GM12878 (cell line): ENCODE measurements at regions of chr11 and their contacts with region 1.

Region 1: GRCh38 chr11:83156150-83156995 is 558 bp upstream of the PCF11 start:
- DNase-seq: peak; percentile 100
- ATAC-seq: peak; percentile 89
- H3K4me3 ChIP-seq: peak overlapping the region; percentile 80
- H3K27ac ChIP-seq: peak overlapping the region; percentile 85
- H3K4me1 ChIP-seq: peaks cover 3% of the 10 kb centered on the region; the same call in 1 of the 2 replicates
- H3K27me3 ChIP-seq: no peaks in the 10 kb centered on the region
- CTCF ChIP-seq: no peak
- EP300 ChIP-seq: no peak; a peak in 1 of 4 replicates
- POLR2A ChIP-seq: no peak
- RAD21 ChIP-seq: no peak

Region 2: DNA sequence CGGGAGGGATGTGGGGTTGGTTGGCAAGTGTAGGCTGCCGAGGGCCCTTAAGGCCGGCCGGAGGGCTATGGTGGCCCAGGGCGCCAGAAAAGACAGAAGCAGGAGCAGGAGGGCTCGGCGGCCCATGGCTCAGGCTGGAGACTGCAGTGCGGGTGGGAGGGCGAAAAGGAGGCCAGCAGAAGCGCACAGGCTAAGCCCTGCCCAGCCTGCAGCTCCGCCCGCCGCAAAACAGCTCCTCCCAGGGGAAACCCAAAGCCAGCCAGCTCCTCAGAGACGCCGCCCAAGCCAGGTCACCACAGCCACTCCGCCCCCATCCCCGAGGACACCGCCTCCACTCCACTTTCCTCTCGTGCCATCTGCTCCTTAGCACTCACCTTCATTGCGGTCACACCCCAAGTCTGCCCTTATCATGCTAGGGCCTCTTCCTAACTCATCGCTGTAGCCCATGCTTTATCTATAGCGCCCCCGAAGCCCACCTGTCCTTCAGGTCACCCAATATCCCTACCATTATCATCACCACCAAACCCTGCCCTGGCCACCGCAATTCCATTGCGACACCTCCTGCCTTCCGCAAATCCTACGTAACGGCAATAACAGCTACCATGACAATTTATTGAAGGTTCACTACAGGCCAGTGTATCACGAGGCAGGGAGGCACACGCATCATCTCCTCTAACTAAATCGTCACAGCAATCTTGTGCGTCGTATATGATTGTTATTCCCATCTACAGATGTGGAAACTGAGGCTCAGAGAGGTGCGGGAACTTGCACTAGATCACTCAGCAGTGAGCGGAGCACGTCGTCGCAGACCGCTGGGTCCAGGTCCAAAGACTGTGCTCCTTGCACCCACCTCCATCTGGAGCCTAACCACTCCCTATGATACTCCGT is 255.9 kb before region 1 on chr11 and contains the start of gene PRCP:
- CTCF ChIA-PET with region 1: interaction called, 6 read pairs
- POLR2A ChIA-PET with region 1: interaction called, 22 read pairs
- RAD21 ChIA-PET with region 1: interaction called, 17 read pairs
- SMC1A ChIA-PET with region 1: interaction called, 7 read pairs
- in situ Hi-C with region 1: loop called (anchors 5 kb)
- intact Hi-C with region 1: loop called (anchors 5 kb)
- DNase-seq: peak; percentile 84
- ATAC-seq: peak; percentile 88
- H3K4me3 ChIP-seq: peak within 1 kb of the TSS; percentile 82
- H3K27ac ChIP-seq: peak within 1 kb of the TSS; percentile 84
- H3K4me1 ChIP-seq: peaks cover 15% of the 10 kb centered on the region
- H3K27me3 ChIP-seq: no peaks in the 10 kb centered on the region
- CTCF ChIP-seq: no peak
- EP300 ChIP-seq: 0 out of 4 replicates have a peak, but pooled peaks of 1 of the 2 experiments have one; percentile 12
- POLR2A ChIP-seq: peak; percentile 84
- RAD21 ChIP-seq: no peak
- polyA plus RNA-seq, gene PRCP: 21.5 to 25.3 TPM

Region 3: DNA sequence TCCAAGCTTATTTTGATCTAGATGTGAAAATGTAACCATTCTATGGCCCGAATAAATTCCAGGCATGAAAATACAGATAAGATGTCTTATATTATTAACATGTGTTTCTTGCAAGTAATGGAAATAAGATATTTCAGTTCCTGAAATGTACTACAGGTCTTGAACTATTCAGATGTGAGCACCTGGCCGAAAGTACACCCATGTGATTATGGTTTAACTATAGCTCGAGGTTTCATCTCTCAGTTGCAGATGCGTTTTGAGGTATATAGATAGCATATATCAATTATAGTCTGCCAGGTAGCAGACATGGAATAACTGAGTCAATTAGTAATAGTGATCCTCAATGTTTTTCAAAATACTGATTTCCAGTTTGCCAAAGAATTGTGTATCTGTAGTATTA is 186.6 kb before region 1 on chr11:
- CTCF ChIA-PET with region 1: no interaction called
- POLR2A ChIA-PET with region 1: no interaction called
- RAD21 ChIA-PET with region 1: interaction called, 10 read pairs
- SMC1A ChIA-PET with region 1: interaction called, 3 read pairs
- in situ Hi-C with region 1: no loop called
- intact Hi-C with region 1: loop called (anchors 2 kb)
- DNase-seq: peak; percentile 84
- ATAC-seq: peak; percentile 83
- H3K4me3 ChIP-seq: no peak overlapping the region
- H3K27ac ChIP-seq: peak overlapping the region; percentile 94
- H3K4me1 ChIP-seq: peaks cover 41% of the 10 kb centered on the region
- H3K27me3 ChIP-seq: no peaks in the 10 kb centered on the region
- CTCF ChIP-seq: no peak
- EP300 ChIP-seq: peak; percentile 99 to 100
- POLR2A ChIP-seq: no peak
- RAD21 ChIP-seq: no peak

Region 4: DNA sequence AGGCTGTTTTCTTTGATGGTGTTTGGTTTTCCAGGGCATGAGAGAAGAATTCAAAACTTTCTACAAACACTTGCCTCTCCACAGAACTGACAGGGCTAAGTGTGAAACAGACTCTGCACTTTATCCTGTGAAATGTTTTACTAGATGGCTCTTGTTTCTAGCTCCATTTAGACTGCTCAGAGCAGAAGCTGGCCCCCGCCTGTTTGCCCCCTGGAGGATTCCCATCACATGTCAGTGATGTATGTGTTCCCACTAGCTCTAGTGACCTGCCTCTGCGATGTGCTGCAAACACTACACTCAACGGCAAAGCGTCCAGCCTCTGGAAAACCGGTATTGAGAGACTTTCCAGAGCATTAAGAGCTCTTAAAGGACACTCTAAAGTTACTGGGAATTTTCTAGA is 40.8 kb before region 1 on chr11:
- CTCF ChIA-PET with region 1: interaction called, 6 read pairs
- POLR2A ChIA-PET with region 1: interaction called, 23 read pairs
- RAD21 ChIA-PET with region 1: interaction called, 21 read pairs
- SMC1A ChIA-PET with region 1: interaction called, 16 read pairs
- in situ Hi-C with region 1: no loop called
- intact Hi-C with region 1: loop called (anchors 2 kb)
- DNase-seq: no peak
- ATAC-seq: no peak
- H3K4me3 ChIP-seq: 0 out of 2 replicates have a peak overlapping the region, but pooled peaks have one; percentile 8
- H3K27ac ChIP-seq: no peak overlapping the region
- H3K4me1 ChIP-seq: peaks cover 12% of the 10 kb centered on the region
- H3K27me3 ChIP-seq: no peaks in the 10 kb centered on the region
- CTCF ChIP-seq: no peak
- EP300 ChIP-seq: no peak
- POLR2A ChIP-seq: no peak
- RAD21 ChIP-seq: no peak

Region 5: DNA sequence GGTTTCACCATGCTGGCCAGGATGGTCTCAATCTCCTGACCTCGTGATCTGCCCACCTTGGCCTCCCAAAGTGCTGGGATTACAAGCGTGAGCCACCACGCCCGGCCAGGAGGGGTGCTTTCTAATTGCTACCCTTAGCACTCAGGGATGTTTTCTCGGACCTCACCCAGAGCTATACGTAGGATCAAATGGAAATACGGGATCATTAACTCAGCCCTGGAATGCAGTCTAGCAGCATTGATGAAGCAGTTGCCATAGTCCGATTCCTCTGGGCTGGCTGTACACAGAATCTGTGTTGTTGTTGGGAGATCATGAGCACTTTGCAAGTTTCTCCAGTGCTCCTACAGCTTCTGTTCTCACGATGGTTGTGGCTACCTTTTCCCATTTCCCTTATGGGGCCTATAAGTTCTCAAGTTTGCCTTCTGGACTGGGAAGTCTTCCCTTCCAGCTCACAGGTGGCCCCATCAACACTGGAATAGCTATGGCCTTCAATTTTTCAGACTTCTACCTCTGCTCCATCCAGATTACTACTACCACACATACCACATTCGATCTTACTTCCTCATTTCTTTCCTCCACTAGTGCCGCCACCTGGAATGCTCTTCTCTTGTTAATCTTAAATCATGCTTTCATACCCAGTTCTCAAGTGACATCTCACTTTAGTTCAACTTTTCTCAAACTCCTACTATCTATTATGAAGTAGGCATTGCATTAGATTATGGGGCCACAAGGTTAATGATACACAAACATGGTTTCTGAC is 15.5 kb before region 1 on chr11:
- CTCF ChIA-PET with region 1: interaction called, 18 read pairs
- POLR2A ChIA-PET with region 1: interaction called, 9 read pairs
- RAD21 ChIA-PET with region 1: interaction called, 4 read pairs
- SMC1A ChIA-PET with region 1: interaction called, 7 read pairs
- in situ Hi-C with region 1: no loop called
- intact Hi-C with region 1: no loop called
- DNase-seq: peak; percentile 59
- ATAC-seq: peak; percentile 94
- H3K4me3 ChIP-seq: no peak overlapping the region
- H3K27ac ChIP-seq: no peak overlapping the region
- H3K4me1 ChIP-seq: peaks cover 11% of the 10 kb centered on the region
- H3K27me3 ChIP-seq: no peaks in the 10 kb centered on the region
- CTCF ChIP-seq: no peak
- EP300 ChIP-seq: no peak
- POLR2A ChIP-seq: no peak
- RAD21 ChIP-seq: no peak

Region 6: GRCh38 chr11:83285771-83286528 is 129.6 kb after region 1 on chr11 and contains the start of gene CCDC90B:
- CTCF ChIA-PET with region 1: interaction called, 3 read pairs
- POLR2A ChIA-PET with region 1: interaction called, 10 read pairs
- RAD21 ChIA-PET with region 1: no interaction called
- SMC1A ChIA-PET with region 1: interaction called, 3 read pairs
- in situ Hi-C with region 1: no loop called
- intact Hi-C with region 1: no loop called
- DNase-seq: peak; percentile 96
- ATAC-seq: peak; percentile 93
- H3K4me3 ChIP-seq: peak within 1 kb of the TSS; percentile 78
- H3K27ac ChIP-seq: peak within 1 kb of the TSS; percentile 96
- H3K4me1 ChIP-seq: peaks cover 21% of the 10 kb centered on the region
- H3K27me3 ChIP-seq: no peaks in the 10 kb centered on the region
- CTCF ChIP-seq: peak in 2 of 3 experiments; percentile 30 to 75; a peak in 3 of 6 replicates
- EP300 ChIP-seq: 0 out of 4 replicates have a peak, but pooled peaks of 1 of the 2 experiments have one; percentile 42
- POLR2A ChIP-seq: peak; percentile 96
- RAD21 ChIP-seq: no peak
- polyA plus RNA-seq, gene CCDC90B: 76.2 to 82.8 TPM